Colonic mucosa (tissue), 4 donors: ENCODE measurements at regions of chr14 and their contacts with region 1.

Region 1: GRCh38 chr14:77457522-77458290 is at the starts of genes AHSA1 and VIPAS39:
- DNase-seq: peak; percentile 96
- H3K4me3 ChIP-seq: peak within 1 kb of the TSS; percentile 92
- H3K27ac ChIP-seq: peak within 1 kb of the TSS; percentile 98
- H3K4me1 ChIP-seq: peaks cover 6% of the 10 kb centered on the region
- H3K27me3 ChIP-seq: no peaks in the 10 kb centered on the region
- CTCF ChIP-seq: no peak
- total RNA-seq, gene AHSA1: 112 to 316 TPM
- total RNA-seq, gene VIPAS39: 16.3 to 17.5 TPM

Region 2: DNA sequence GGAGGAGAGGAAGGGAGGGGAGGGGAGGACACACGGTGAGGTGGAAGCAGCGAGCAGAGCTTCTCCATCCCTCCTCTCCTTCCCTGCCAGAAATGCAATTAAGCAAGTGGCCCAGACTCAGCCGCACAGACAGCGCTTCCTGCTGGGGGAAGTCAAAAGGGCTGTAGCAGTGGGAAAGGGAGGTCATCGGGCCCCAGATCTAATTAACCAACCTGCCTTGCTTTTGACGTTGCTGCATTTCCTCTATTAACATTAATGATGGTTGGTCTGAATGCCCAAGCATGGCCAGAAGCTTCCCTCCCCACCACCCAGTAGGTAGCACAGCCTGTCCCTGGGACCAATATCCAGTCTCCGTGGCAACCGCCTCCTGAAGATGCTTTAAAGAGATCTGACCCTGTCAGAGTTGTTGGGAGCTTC is 182.1 kb before region 1 on chr14:
- intact Hi-C with region 1: no loop called
- DNase-seq: no peak
- H3K4me3 ChIP-seq: no peak overlapping the region
- H3K27ac ChIP-seq: no peak overlapping the region
- H3K4me1 ChIP-seq: no peaks in the 10 kb centered on the region
- H3K27me3 ChIP-seq: peaks cover 11% of the 10 kb centered on the region
- CTCF ChIP-seq: no peak

Region 3: DNA sequence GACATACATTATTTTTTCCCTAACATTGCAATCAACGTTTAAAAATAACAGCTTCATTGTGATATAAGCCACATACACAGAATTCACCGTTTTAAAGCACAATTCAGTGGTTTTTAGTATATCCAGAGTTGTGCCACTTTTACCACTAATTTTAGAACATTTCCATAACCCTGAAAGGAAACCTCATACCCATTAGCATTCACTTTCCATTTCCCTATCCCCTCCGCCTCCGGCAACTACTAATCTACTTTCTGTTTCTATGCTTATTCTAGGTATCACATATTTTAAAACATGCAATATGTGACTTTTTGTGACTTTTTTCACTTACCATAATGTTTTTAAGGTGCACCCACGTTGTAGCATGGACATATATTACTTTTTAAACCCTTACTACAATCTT is 96.5 kb after region 1 on chr14:
- intact Hi-C with region 1: loop called (anchors 2 kb)
- DNase-seq: no peak
- H3K4me3 ChIP-seq: no peak overlapping the region
- H3K27ac ChIP-seq: no peak overlapping the region
- H3K4me1 ChIP-seq: no peaks in the 10 kb centered on the region
- H3K27me3 ChIP-seq: no peaks in the 10 kb centered on the region
- CTCF ChIP-seq: no peak

Region 4: DNA sequence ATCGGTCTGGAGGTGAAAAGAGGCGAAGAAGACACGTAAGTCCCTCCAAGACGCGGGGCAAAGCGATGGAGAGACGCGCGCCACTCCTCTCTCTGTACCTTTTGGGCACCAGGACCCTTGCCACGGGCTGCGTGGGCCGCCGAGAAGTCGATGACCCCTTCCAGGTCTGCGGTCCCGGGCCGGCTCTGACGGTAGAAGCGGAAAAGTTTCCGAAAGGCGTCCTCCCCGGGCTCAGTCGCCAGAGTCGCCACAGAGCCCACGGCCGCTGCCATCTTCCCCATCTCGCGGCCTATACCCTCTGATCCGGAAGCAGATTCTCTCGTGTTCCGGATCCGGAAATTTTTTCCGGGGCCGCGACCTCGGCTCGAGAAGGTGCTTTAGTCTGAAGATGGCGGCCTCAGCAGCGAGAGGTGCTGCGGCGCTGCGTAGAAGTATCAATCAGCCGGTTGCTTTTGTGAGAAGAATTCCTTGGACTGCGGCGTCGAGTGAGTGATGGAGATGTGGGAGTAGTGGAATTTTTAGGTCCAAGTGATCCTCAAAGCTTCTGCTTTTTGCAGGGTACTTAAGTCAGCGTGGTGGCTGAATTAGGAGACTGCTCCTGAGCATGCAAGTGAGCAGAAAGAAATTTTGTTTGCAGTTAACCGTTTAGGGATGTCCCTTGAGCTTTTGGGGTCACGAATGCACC is 250.2 kb after region 1 on chr14 and contains the starts of genes ALKBH1 and SLIRP:
- intact Hi-C with region 1: loop called (anchors 10 kb)
- DNase-seq: peak; percentile 93
- H3K4me3 ChIP-seq: peak within 1 kb of the TSS; percentile 98
- H3K27ac ChIP-seq: peak within 1 kb of the TSS; percentile 41
- H3K4me1 ChIP-seq: peaks cover 17% of the 10 kb centered on the region
- H3K27me3 ChIP-seq: no peaks in the 10 kb centered on the region
- CTCF ChIP-seq: no peak
- total RNA-seq, gene ALKBH1: 11.5 to 13.3 TPM
- total RNA-seq, gene SLIRP: 107 to 194 TPM